Right lobe of liver (tissue), 6 donors: ENCODE measurements at regions of chr6 and their contacts with region 1.

Region 1: DNA sequence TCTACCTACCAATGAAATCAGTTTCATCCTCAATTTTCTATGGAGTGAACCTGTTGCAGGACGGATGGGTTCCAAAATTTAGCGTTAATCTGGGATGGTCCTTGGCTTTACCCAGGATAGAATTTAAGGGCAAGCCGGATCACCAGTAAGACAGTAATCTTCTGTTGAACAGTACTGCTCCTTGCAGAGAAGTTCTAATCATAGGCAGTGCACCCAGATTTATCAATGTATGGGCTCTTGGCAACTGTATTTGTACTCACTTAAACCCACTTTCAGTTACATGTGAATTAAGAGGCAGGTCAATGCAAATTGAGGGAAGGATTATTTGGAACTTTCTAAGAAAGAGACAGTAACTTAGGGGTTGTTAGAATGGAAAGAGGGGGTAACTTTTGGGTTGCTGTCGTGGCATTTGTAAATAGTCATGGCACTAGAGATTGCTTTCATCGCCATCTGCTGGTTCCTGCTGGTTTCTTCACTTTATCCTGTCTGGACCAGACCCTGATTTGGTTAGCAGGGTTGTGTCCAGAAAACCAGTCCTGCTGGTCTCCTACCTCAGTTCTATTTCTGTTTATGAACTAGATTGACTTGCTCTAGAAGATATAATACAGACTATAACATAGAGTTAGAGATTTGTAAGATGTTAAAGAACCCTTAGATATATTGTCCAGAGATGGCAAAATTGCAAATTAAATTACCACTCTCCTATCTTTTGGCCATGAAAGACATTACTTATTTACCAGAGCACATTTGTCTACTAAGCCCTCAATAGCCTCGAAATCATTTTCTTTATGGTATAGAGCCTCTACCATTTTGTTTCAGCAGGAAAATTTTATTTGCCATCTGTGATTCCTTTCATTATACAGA is 646.3 kb downstream of the UTRN start:
- DNase-seq: peak in 1 of 3 donors; percentile 59
- ATAC-seq: peak; percentile 80 to 85 (median 83)
- H3K4me3 ChIP-seq: no peak overlapping the region
- H3K27ac ChIP-seq: peak overlapping the region in 1 of 3 donors; percentile 26
- H3K4me1 ChIP-seq: peaks cover 0 to 21% (median 7%) of the 10 kb centered on the region in 4 donors
- H3K27me3 ChIP-seq: no peaks in the 10 kb centered on the region
- CTCF ChIP-seq: peak; percentile 56 to 78 (median 73)
- POLR2A ChIP-seq: no peak

Region 2: GRCh38 chr6:144582939-144583613 is 348.3 kb before region 1 on chr6:
- intact Hi-C with region 1: loop called in 1 of 2 experiments (anchors 5 kb)
- DNase-seq: peak; percentile 42 to 64 (median 50)
- ATAC-seq: peak; percentile 48 to 70 (median 62)
- H3K4me3 ChIP-seq: no peak overlapping the region
- H3K27ac ChIP-seq: no peak overlapping the region
- H3K4me1 ChIP-seq: no peaks in the 10 kb centered on the region
- H3K27me3 ChIP-seq: no peaks in the 10 kb centered on the region
- CTCF ChIP-seq: no peak
- POLR2A ChIP-seq: no peak